Mammary epithelial cell (primary cell): ENCODE measurements at regions of chr2 and their contacts with region 1.

Region 1: DNA sequence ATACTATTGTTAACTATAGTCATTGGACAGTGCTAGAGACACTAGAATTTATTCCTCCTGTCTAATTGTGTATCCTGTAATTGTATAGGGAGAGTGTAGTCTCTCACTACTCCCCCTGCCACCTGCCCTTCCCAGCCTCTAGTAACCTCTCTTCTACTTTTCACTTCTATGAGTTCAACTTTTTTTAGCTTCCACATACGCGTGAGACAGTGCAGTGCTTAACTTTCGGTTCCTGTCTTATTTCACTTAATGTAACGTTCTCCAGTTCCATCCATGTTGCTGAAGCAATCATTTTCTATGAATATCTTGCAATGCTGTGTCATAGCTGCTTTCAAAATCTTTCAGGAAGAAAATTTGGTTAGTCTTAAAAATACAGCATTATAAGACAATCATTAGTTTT is 22.8 kb upstream of the RUFY4 start:
- DNase-seq: no peak
- H3K4me3 ChIP-seq: no peak overlapping the region
- H3K27ac ChIP-seq: no peak overlapping the region
- H3K4me1 ChIP-seq: no peaks in the 10 kb centered on the region
- H3K27me3 ChIP-seq: peaks cover 17% of the 10 kb centered on the region
- CTCF ChIP-seq: no peak

Region 2: DNA sequence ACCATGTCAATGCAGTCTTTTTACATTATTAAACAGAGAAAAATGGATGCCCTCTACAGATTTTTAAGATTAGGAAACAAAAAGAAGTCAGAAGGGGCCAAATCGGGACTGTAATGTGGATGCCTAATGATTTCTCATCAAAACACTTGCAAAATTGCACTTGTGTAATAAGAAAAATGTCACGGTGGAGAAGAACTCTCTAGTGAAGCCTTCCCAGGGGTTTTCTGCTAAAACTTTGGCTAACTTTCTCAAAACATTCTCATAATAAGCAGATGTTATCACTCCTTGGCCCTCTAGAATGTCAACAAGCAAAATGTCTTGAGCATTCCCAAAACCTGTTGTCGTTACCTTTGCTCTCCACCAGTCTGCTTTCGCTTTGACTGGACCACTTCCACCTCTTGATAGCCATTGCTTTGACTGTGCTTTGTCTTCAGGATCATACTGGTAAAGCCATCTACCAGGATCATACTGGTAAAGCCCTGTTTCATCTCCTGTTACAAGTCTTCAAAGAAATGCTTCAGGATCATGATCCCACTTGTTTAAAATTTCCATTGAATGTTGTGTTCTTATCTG is 270.2 kb before region 1 on chr2:
- CTCF ChIA-PET with region 1: no interaction called
- dilution Hi-C with region 1: loop called (anchors 5 kb)
- in situ Hi-C with region 1: no loop called
- intact Hi-C with region 1: no loop called
- DNase-seq: no peak
- H3K4me3 ChIP-seq: no peak overlapping the region
- H3K27ac ChIP-seq: no peak overlapping the region
- H3K4me1 ChIP-seq: no peaks in the 10 kb centered on the region
- H3K27me3 ChIP-seq: peaks cover 2% of the 10 kb centered on the region
- CTCF ChIP-seq: no peak

Region 3: DNA sequence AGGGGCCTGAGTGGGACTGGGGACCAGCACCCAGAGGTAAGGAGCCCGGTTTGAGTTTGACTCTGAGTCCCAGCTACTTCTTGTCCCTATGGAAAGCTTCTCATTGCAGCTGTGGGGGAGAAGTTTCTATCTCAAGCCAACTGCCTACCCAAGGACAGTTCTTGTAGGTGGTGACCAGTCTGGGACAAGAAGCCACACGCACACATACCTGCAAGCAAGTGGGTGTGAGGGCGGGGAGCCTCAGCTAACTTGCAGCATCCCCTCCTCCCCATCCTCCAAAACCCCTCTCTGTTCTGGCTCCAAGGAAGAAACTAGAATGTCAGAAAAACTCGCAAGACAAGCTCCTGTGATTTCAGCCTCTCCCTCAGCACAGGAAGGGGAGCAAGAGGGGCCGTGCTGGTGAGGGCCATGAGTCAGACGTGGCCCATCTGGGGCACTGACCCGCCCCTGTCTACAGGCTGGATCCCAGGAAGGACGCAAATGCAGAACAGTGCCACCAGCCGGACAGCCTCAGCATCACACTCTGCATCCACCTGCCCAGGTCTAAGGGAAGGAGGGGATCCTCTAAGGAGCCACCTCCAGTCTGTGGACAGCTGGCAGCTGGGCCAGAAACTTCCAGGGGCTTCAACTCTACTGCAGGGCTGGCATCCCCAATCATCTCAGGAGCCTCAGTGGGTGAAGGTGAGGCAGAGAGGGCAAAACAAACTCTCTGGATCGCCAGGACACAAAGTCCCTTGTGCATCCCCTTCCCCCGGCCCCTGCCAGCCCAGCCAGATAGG is 146.8 kb before region 1 on chr2:
- CTCF ChIA-PET with region 1: no interaction called
- dilution Hi-C with region 1: no loop called
- in situ Hi-C with region 1: no loop called
- intact Hi-C with region 1: no loop called
- DNase-seq: peak; percentile 76
- H3K4me3 ChIP-seq: no peak overlapping the region
- H3K27ac ChIP-seq: no peak overlapping the region
- H3K4me1 ChIP-seq: peaks cover 26% of the 10 kb centered on the region
- H3K27me3 ChIP-seq: peaks cover 3% of the 10 kb centered on the region
- CTCF ChIP-seq: peak; percentile 74 to 79

Region 4: GRCh38 chr2:218516614-218517013 is 470.4 kb after region 1 on chr2:
- CTCF ChIA-PET with region 1: interaction called, 11 read pairs
- dilution Hi-C with region 1: no loop called
- in situ Hi-C with region 1: no loop called
- intact Hi-C with region 1: no loop called
- DNase-seq: no peak
- H3K4me3 ChIP-seq: no peak overlapping the region
- H3K27ac ChIP-seq: no peak overlapping the region
- H3K4me1 ChIP-seq: no peaks in the 10 kb centered on the region
- H3K27me3 ChIP-seq: no peaks in the 10 kb centered on the region
- CTCF ChIP-seq: peak; percentile 47 to 50